AG04449 (cell line): ENCODE measurements at regions of chr16 and their contacts with region 1.

Region 1: GRCh38 chr16:69276148-69277115 is 34.7 kb upstream of the VPS4A start:
- DNase-seq: peak; percentile 93
- H3K4me3 ChIP-seq: peak overlapping the region; percentile 31; the same call in 1 of the 2 replicates
- CTCF ChIP-seq: no peak

Region 2: DNA sequence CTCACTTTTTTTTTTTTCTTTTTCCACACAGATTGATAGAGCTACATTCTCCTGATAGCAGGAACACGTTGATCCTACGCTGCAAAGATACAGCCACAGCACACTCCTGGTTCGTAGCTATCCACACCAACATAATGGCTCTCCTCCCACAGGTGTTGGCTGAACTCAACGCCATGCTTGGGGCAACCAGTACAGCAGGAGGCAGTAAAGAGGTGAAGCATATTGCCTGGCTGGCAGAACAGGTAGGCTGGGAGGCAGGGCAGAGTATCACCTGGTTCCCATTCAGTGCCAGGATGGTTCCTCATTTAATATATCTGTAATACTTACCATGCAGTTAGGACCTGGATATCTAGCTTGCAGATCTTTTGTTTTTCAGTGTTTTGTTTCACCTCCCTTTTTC is 16.4 kb before region 1 on chr16:
- CTCF ChIA-PET with region 1: interaction called, 10 read pairs
- POLR2A ChIA-PET with region 1: no interaction called
- DNase-seq: no peak
- H3K4me3 ChIP-seq: no peak overlapping the region
- CTCF ChIP-seq: no peak

Region 3: DNA sequence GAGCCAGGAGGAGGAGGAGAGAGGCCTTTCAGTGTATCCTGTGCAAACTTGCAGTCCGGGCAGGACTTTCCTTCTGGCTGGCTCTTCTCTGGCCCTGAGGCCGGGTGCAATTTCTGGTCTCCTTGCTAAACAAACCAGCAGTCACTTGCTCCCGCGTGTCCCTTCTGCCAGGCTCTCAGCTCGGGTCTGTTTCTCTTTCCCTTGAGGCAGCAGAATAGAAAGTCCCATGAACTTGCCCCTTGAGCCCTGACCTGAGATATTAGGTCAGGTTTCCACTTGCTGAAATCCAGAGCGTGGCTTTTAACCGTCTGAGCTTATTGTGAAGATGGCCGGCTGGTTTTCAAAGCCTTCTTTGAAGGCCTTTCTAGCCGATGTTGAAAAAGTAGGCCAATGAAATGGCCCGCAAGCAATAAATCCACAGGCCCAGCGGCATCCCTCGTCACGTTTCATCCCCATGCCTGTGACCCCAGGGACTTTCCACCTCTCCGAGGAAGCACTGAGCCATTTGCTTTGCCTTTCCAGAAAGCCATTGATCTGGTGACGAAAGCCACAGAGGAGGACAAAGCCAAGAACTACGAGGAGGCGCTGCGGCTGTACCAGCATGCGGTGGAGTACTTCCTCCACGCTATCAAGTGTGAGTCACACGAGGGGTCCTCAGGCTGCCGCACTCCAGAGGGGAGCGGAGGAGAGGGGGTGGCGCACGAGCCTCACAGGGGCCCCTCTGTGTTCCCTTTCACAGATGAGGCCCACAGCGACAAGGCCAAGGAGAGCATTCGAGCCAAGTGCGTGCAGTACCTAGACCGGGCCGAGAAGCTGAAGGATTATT is 39.3 kb after region 1 on chr16:
- CTCF ChIA-PET with region 1: no interaction called
- POLR2A ChIA-PET with region 1: no interaction called
- DNase-seq: no peak
- H3K4me3 ChIP-seq: no peak overlapping the region
- CTCF ChIP-seq: no peak